Body of pancreas (tissue), 4 donors: ENCODE measurements at regions of chr6 and their contacts with region 1.

Region 1: DNA sequence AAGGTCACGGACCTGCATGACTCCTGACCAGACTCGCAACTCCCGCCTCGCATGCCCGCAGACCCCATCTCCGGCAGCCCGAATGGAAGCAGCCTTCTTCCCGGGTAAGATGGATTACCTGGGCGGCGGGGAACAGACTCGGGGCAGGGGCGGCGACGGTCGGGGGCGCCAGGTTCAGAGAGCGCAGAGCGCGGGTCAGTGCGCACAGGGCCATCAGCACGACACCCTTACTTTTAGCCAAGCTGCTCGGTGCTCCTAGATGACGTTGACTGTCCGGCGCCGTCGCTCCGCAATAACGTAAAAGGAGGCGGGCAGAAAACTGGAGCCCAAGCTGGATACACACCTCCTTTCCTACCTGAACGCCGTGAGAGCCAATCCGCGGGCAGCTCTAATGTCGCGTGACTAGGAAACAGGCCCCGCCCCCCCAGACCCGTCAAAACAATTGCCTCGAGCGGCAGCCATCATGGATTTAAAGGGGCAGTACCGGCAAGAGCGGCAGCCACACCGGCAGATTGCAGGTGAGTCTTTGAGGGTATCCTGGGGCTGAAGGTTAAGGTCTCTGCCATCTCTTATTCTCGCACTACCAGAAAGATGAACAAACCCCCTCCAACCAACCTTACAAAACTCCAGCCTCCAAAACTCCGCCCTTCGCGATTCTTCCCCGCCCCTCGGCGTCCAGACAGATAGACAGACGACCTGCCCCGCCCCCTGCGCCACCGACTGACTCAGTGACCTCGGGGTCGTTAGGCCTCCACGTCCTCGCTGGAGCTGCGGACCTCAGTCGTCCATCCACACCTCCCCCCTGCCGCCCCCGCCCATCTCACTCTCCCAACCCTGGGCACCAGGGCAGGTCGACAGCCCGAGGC is at the starts of genes KLC4 and MRPL2:
- DNase-seq: peak; percentile 98 to 99 (median 99)
- ATAC-seq: peak; percentile 95
- H3K4me3 ChIP-seq: peak within 1 kb of the TSS; percentile 63 to 87
- H3K27ac ChIP-seq: peak within 1 kb of the TSS; percentile 77 to 96 (median 92)
- H3K4me1 ChIP-seq: peaks cover 29% of the 10 kb centered on the region
- H3K27me3 ChIP-seq: no peaks in the 10 kb centered on the region
- CTCF ChIP-seq: no peak
- POLR2A ChIP-seq: peak; percentile 60 to 89 (median 87)
- total RNA-seq, gene KLC4: 19.8 to 33.5 TPM
- total RNA-seq, gene MRPL2: 13.5 to 15.2 TPM

Region 2: GRCh38 chr6:42547407-42548329 is 511.7 kb before region 1 on chr6:
- intact Hi-C with region 1: no loop called
- DNase-seq: peak; percentile 78 to 84 (median 82)
- ATAC-seq: peak; percentile 96
- H3K4me3 ChIP-seq: peak overlapping the region in 1 of 2 donors; percentile 11
- H3K27ac ChIP-seq: peak overlapping the region in 2 of 4 donors; percentile 9 to 10
- H3K4me1 ChIP-seq: peaks cover 7% of the 10 kb centered on the region
- H3K27me3 ChIP-seq: no peaks in the 10 kb centered on the region
- CTCF ChIP-seq: peak; percentile 86 to 97 (median 91)
- POLR2A ChIP-seq: no peak

Region 3: GRCh38 chr6:43016176-43016942 is 43.0 kb before region 1 on chr6:
- intact Hi-C with region 1: loop called (anchors 5 kb)
- DNase-seq: no peak
- ATAC-seq: no peak
- H3K4me3 ChIP-seq: no peak overlapping the region
- H3K27ac ChIP-seq: no peak overlapping the region
- H3K4me1 ChIP-seq: peaks cover 57% of the 10 kb centered on the region
- H3K27me3 ChIP-seq: no peaks in the 10 kb centered on the region
- CTCF ChIP-seq: no peak
- POLR2A ChIP-seq: no peak